ENCODE measurements at regions of chr6 and their contacts with region 1.

Region 1: GRCh38 chr6:130365166-130366106 is at the start of gene TMEM200A:
- DNase-seq: peak; percentile 61
- H3K4me3 Mint-ChIP-seq: peak within 1 kb of the TSS; percentile 76
- H3K27ac Mint-ChIP-seq: no peak within 1 kb of the TSS
- H3K4me1 Mint-ChIP-seq: peaks cover 19% of the 10 kb centered on the region
- H3K27me3 Mint-ChIP-seq: peaks cover 7% of the 10 kb centered on the region
- total RNA-seq, gene TMEM200A: 0.34 to 0.78 TPM

Region 2: DNA sequence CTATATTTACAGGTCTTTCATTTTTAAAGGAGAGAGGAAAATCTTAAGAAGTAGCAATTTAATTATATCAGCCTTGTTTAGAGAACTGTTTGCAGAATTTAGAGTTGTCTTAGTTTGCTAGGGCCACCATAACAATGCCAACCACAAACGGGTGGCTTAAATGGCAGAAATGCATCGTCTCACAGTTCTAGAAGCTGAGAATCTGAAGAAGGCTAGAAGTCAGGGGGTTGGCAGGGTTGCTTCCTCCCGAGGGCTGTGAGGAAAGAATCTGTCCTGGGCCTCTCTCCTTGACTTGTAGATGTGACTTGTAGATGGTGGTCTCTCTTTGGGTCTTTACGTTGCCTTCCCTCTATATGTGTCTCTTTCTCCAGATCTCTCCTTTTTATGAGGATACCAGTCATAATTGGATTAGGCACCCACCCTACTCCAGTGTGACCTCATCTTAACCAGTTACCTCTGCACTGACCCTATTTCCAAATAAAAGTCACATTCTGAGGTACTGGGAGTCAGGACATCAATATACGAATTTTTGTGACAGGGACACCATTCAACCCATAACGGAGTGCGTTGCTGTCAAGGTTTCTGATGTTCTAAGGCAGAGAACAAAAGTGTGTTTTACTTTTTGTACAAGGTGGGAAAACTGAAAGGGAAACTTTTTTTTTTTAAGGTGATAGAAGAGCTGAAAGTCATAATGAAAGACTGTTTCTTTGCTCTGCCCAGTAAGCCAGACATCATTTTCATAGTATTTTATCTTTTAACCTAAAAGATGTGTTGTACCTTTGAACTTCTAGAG is 227.1 kb before region 1 on chr6:
- CTCF ChIA-PET with region 1: no interaction called
- POLR2A ChIA-PET with region 1: no interaction called
- intact Hi-C with region 1: loop called (anchors 5 kb)
- DNase-seq: no peak
- H3K4me3 Mint-ChIP-seq: peak overlapping the region; percentile 44
- H3K27ac Mint-ChIP-seq: peak overlapping the region; percentile 55
- H3K4me1 Mint-ChIP-seq: peaks cover 52% of the 10 kb centered on the region
- H3K27me3 Mint-ChIP-seq: no peaks in the 10 kb centered on the region

Region 3: GRCh38 chr6:130293800-130294199 is 71.6 kb before region 1 on chr6:
- CTCF ChIA-PET with region 1: no interaction called
- POLR2A ChIA-PET with region 1: no interaction called
- intact Hi-C with region 1: no loop called
- DNase-seq: peak; percentile 33
- H3K4me3 Mint-ChIP-seq: no peak overlapping the region
- H3K27ac Mint-ChIP-seq: no peak overlapping the region
- H3K4me1 Mint-ChIP-seq: no peaks in the 10 kb centered on the region
- H3K27me3 Mint-ChIP-seq: peaks cover 2% of the 10 kb centered on the region

Region 4: GRCh38 chr6:130708338-130708737 is 342.9 kb after region 1 on chr6:
- CTCF ChIA-PET with region 1: no interaction called
- POLR2A ChIA-PET with region 1: no interaction called
- intact Hi-C with region 1: no loop called
- DNase-seq: peak; percentile 14
- H3K4me3 Mint-ChIP-seq: no peak overlapping the region
- H3K27ac Mint-ChIP-seq: no peak overlapping the region
- H3K4me1 Mint-ChIP-seq: peaks cover 10% of the 10 kb centered on the region
- H3K27me3 Mint-ChIP-seq: peaks cover 1% of the 10 kb centered on the region